CD8-positive, alpha-beta T cell (primary cell): ENCODE measurements at regions of chr15 and their contacts with region 1.

Region 1: DNA sequence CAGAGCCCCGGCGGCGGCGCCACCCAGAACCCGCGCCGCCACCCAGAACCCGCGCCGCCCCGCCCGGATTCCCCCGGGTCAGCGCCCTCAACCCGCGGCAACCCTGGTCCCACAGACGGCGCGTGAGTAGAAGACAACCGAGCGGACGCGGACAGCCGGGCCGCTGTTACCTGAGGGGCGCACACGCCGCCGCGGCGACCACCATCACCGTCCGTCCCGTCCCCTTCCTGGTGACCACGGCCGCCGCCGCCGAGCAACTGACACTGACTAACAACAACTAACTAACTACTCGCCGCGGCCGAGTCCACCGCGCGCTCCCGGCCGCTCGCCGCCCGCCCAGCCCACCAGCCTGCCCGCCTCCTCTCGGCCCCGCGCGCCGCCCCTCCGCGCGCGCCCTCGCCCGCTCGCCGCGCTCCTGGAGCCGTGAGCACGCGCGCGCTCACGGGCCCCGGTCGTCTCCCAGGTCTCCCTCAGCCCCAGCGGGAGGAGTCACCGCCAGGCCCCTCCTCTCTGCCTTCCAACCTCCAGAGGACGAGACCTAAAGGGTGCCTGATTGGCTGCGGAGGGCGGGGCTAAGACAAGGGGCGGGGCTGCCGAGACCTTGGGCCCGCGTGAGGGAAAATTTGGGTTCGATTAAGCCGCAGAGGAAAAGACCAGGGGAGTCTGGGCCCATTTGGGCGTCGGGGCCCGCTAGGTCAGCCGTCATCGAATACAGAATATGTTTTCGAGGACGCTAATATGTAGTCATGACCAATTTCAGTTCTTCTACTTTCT is at the start of gene PEAK1:
- DNase-seq: peak; percentile 99 to 100 (median 100)
- ATAC-seq: peak; percentile 99
- H3K4me3 ChIP-seq: peak within 1 kb of the TSS; percentile 74 to 75
- H3K4me3 Mint-ChIP-seq: peak within 1 kb of the TSS; percentile 97
- H3K27ac ChIP-seq: peak within 1 kb of the TSS; percentile 61 to 93
- H3K27ac Mint-ChIP-seq: peak within 1 kb of the TSS; percentile 97
- H3K4me1 ChIP-seq: peaks cover 17% of the 10 kb centered on the region
- H3K4me1 Mint-ChIP-seq: peaks cover 49% of the 10 kb centered on the region
- H3K27me3 ChIP-seq: no peaks in the 10 kb centered on the region
- H3K27me3 Mint-ChIP-seq: no peaks in the 10 kb centered on the region
- CTCF ChIP-seq: no peak
- total RNA-seq, gene PEAK1: 12.4 to 15.7 TPM

Region 2: DNA sequence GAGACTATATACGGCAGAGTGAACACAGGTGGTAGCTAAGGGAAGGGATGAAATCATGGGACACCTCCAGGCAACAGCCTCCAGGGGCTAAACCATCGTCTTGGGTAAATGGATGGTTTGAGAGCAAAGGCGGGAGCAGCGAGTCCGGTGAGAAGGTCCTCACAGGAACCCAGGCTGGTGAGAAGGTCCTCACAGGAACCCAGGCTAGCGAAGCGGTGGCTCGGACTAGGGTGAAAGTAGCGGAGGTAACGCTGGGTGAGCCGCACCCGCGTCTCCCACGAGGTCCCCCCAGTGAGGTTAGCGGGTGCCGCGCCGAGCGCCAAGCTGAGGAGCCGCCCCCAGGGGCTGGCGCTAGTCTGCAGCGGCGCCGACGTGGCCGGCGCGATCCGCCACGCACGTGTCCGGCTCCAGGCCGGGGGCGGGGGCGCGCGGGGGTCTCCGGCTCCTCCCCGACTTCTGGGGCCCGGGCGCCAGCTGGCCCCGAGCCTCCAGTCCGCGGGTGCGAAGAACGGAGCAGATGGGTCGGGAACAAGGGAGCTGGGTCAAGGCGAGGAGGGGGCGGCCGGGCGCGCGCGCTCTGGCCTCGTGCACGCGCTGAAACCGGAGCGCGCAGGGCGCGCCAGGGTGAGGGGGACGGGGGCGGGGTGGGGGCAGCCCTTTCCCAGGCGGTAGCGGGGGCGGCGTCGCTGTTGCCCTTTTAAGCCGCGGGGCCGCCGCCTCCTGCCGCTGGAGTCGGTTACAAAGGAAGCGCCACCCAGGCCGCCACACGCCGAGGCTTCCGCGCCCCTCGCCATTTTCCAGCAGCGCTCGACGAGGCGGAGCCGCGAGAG is 1577.1 kb before region 1 on chr15 and contains the start of gene UBE2Q2:
- CTCF ChIA-PET with region 1: no interaction called
- POLR2A ChIA-PET with region 1: no interaction called
- intact Hi-C with region 1: loop called in 1 of 2 experiments (anchors 5 kb)
- DNase-seq: peak; percentile 13 to 86 (median 75)
- ATAC-seq: peak; percentile 62
- H3K4me3 ChIP-seq: peak within 1 kb of the TSS; percentile 72 to 73
- H3K4me3 Mint-ChIP-seq: peak within 1 kb of the TSS; percentile 90
- H3K27ac ChIP-seq: peak within 1 kb of the TSS; percentile 58 to 59
- H3K27ac Mint-ChIP-seq: peak within 1 kb of the TSS; percentile 93
- H3K4me1 ChIP-seq: peaks cover 26% of the 10 kb centered on the region
- H3K4me1 Mint-ChIP-seq: peaks cover 45% of the 10 kb centered on the region
- H3K27me3 ChIP-seq: no peaks in the 10 kb centered on the region
- H3K27me3 Mint-ChIP-seq: no peaks in the 10 kb centered on the region
- CTCF ChIP-seq: no peak
- total RNA-seq, gene UBE2Q2: 28.5 to 30.4 TPM

Region 3: GRCh38 chr15:76285239-76285825 is 1134.7 kb before region 1 on chr15:
- CTCF ChIA-PET with region 1: no interaction called
- POLR2A ChIA-PET with region 1: no interaction called
- intact Hi-C with region 1: loop called in 1 of 2 experiments (anchors 5 kb)
- DNase-seq: peak in 2 of 9 experiments; percentile 18 to 46
- ATAC-seq: peak; percentile 29
- H3K4me3 ChIP-seq: no peak overlapping the region
- H3K4me3 Mint-ChIP-seq: no peak overlapping the region
- H3K27ac ChIP-seq: peak overlapping the region in 1 of 2 experiments; percentile 76
- H3K27ac Mint-ChIP-seq: no peak overlapping the region
- H3K4me1 ChIP-seq: peaks cover 11% of the 10 kb centered on the region
- H3K4me1 Mint-ChIP-seq: peaks cover 37% of the 10 kb centered on the region
- H3K27me3 ChIP-seq: no peaks in the 10 kb centered on the region
- H3K27me3 Mint-ChIP-seq: no peaks in the 10 kb centered on the region
- CTCF ChIP-seq: peak; percentile 61

Region 4: GRCh38 chr15:76905013-76905839 is 514.8 kb before region 1 on chr15 and contains the start of gene SCAPER:
- CTCF ChIA-PET with region 1: no interaction called
- POLR2A ChIA-PET with region 1: no interaction called
- intact Hi-C with region 1: loop called (anchors 5 kb)
- DNase-seq: peak; percentile 72 to 95 (median 92)
- ATAC-seq: peak; percentile 86
- H3K4me3 ChIP-seq: peak within 1 kb of the TSS; percentile 82 to 88
- H3K4me3 Mint-ChIP-seq: peak within 1 kb of the TSS; percentile 91
- H3K27ac ChIP-seq: peak within 1 kb of the TSS; percentile 47 to 81
- H3K27ac Mint-ChIP-seq: peak within 1 kb of the TSS; percentile 96
- H3K4me1 ChIP-seq: peaks cover 24% of the 10 kb centered on the region
- H3K4me1 Mint-ChIP-seq: peaks cover 36% of the 10 kb centered on the region
- H3K27me3 ChIP-seq: no peaks in the 10 kb centered on the region
- H3K27me3 Mint-ChIP-seq: no peaks in the 10 kb centered on the region
- CTCF ChIP-seq: no peak
- total RNA-seq, gene SCAPER: 21.7 to 29.7 TPM

Region 5: DNA sequence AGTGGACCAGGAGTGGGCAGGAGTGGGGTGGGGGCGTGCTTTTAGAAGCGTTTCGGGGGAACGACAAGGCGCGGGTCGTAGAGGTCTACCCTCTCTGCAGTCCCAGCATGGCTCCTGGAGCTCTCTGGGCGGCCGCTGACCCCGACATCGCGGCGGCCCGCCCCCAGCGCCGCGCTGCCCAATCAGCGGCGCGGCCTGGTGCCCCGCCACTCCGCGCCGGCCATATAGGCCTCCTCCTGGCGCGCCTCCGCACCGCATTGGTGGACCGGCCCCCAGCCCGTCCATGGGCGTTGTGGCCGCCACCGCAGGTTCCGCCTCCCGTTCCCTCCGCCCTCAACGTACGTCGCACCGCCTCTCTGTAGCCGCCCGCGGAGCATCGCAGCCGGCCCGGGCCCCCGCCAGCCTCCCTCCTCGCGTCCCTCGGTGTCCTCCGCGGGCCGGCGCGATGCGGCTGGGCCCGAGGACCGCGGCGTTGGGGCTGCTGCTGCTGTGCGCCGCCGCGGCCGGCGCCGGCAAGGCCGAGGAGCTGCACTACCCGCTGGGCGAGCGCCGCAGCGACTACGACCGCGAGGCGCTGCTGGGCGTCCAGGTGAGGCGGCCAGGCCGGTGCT is 488.5 kb before region 1 on chr15 and contains the start of gene RCN2:
- CTCF ChIA-PET with region 1: no interaction called
- POLR2A ChIA-PET with region 1: no interaction called
- intact Hi-C with region 1: loop called (anchors 1 to 2 kb)
- DNase-seq: peak; percentile 81 to 96 (median 93)
- ATAC-seq: peak; percentile 97
- H3K4me3 ChIP-seq: peak within 1 kb of the TSS; percentile 62 to 63
- H3K4me3 Mint-ChIP-seq: peak within 1 kb of the TSS; percentile 90
- H3K27ac ChIP-seq: peak within 1 kb of the TSS; percentile 63 to 65
- H3K27ac Mint-ChIP-seq: peak within 1 kb of the TSS; percentile 91
- H3K4me1 ChIP-seq: peaks cover 24% of the 10 kb centered on the region
- H3K4me1 Mint-ChIP-seq: peaks cover 34% of the 10 kb centered on the region
- H3K27me3 ChIP-seq: no peaks in the 10 kb centered on the region
- H3K27me3 Mint-ChIP-seq: no peaks in the 10 kb centered on the region
- CTCF ChIP-seq: no peak
- total RNA-seq, gene RCN2: 25.9 to 29.7 TPM

Region 6: DNA sequence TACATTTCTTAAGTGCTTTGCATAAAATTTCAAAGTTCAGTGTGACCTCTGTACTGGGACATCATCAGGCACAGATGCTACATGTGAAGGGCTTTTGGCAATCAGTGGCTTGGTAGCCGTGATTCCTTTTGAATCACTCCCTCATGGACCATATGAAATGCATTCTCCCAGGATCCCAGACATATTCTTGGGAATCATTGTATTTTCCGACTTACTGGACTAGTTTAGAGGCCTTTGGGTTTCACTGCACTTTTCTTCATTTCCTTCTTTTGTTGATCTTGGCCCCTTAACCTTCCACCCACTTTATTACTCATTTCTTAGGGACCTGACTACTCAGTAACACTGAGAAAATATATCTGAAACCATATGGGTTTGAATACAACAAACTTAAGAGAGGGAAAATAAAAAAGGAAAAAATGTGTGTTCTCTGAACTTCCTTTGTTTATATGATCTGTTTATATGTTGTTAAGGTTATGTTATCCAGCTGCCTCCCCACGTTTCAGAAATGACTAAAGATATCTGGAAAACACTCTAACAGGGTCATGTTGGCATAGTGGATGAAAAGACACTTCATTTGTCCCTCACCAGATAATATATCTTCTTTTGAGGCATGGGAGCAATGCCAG is 35.8 kb after region 1 on chr15:
- CTCF ChIA-PET with region 1: no interaction called
- POLR2A ChIA-PET with region 1: no interaction called
- intact Hi-C with region 1: loop called in 1 of 2 experiments (anchors 5 kb)
- DNase-seq: no peak
- ATAC-seq: no peak
- H3K4me3 ChIP-seq: no peak overlapping the region
- H3K4me3 Mint-ChIP-seq: no peak overlapping the region
- H3K27ac ChIP-seq: no peak overlapping the region
- H3K27ac Mint-ChIP-seq: peak overlapping the region; percentile 3
- H3K4me1 ChIP-seq: peaks cover 22% of the 10 kb centered on the region
- H3K4me1 Mint-ChIP-seq: peaks cover 43% of the 10 kb centered on the region
- H3K27me3 ChIP-seq: no peaks in the 10 kb centered on the region
- H3K27me3 Mint-ChIP-seq: no peaks in the 10 kb centered on the region
- CTCF ChIP-seq: no peak

Region 7: GRCh38 chr15:77607111-77607893 is 187.3 kb after region 1 on chr15:
- CTCF ChIA-PET with region 1: no interaction called
- POLR2A ChIA-PET with region 1: no interaction called
- intact Hi-C with region 1: no loop called
- DNase-seq: no peak
- ATAC-seq: no peak
- H3K4me3 ChIP-seq: no peak overlapping the region
- H3K4me3 Mint-ChIP-seq: no peak overlapping the region
- H3K27ac ChIP-seq: no peak overlapping the region
- H3K27ac Mint-ChIP-seq: no peak overlapping the region
- H3K4me1 ChIP-seq: peaks cover 5% of the 10 kb centered on the region
- H3K4me1 Mint-ChIP-seq: peaks cover 9% of the 10 kb centered on the region
- H3K27me3 ChIP-seq: no peaks in the 10 kb centered on the region
- H3K27me3 Mint-ChIP-seq: peaks cover 5% of the 10 kb centered on the region
- CTCF ChIP-seq: no peak